Colonic mucosa (tissue), 4 donors: ENCODE measurements at regions of chr1 and their contacts with region 1.

Region 1: DNA sequence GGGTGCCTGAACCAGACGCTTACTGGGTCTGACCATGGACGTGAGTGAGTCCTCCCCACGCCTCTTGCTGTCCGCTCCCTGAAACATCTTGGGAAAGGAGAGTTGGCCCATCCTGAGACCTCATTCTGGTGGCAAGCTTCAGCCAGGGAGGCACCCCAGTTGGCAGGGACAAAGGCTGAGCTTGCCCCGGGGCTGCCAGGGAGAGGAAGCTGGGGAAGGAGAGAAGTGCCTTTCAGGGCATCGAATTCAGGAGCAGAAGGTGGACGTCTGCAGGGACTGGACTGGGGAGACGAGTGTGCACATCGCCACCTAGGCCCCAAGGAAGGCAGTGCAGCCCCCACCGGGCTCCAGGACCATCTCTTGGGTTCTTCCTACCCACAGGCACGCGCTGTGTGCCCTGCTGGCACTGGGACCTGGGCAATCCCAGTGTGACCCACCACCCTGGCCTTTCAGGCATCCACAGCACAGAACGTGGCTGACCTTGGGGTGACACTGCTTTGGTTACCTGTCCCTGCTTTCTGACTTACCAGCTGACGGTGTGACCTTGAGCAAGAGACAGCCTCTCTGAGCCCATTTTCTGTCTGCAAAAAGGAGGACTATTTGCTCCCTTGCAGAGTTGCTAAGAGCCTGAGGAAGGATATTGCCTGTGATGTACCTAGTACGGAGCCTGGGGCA is 133.0 kb upstream of the WNT4 start:
- DNase-seq: peak; percentile 68
- H3K4me3 ChIP-seq: no peak overlapping the region
- H3K27ac ChIP-seq: no peak overlapping the region
- H3K4me1 ChIP-seq: no peaks in the 10 kb centered on the region
- H3K27me3 ChIP-seq: no peaks in the 10 kb centered on the region
- CTCF ChIP-seq: peak; percentile 83

Region 2: GRCh38 chr1:22105611-22106207 is 170.1 kb before region 1 on chr1:
- intact Hi-C with region 1: loop called (anchors 10 kb)
- DNase-seq: peak; percentile 38
- H3K4me3 ChIP-seq: no peak overlapping the region
- H3K27ac ChIP-seq: no peak overlapping the region
- H3K4me1 ChIP-seq: no peaks in the 10 kb centered on the region
- H3K27me3 ChIP-seq: no peaks in the 10 kb centered on the region
- CTCF ChIP-seq: peak; percentile 76